ENCODE measurements at regions of chr16 and their contacts with region 1.

Region 1: DNA sequence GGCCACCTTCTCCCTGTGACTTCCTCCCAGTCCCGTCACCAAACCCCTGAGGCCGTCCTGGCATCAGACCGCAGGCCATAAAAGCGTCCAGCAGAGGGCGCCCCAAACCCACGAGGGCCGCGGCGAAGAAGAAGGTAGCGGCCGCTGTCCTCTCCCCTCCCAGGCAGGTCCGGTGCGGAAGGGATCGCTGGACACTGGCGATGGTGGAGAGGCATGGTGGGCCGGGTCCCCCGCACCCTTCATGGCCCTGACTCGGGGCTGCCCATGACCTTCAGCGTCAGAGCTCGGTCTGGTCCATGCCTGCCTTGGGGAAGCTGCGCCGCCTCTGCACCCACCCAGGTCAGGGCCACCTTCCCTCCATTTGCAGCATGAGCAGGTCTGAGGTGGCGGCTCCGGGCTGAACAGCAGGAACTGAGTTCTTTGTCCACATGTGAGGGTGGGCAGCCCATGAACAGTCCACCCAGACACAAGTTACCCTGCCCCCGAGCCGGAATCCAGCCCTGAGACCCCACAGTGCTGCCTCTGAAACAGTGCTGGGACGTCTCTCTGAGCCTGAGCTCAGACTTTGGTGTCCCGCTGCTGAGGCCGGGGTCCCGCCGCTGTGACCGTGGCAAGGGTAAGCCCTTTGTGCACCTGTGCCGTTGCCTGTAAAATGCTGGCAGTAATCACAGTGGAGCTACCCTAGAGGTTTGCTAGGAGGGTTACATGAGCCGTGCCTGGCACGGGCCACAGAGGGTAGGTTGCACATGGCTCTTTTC is 40.8 kb upstream of the CMIP start:
- DNase-seq: peak; percentile 86 to 88
- ATAC-seq: peak; percentile 81 to 95 (median 93)
- H3K4me3 ChIP-seq: peak overlapping the region in 7 of 10 donors; percentile 13 to 44 (median 20)
- H3K27ac ChIP-seq: peak overlapping the region in 1 of 10 donors; percentile 34
- H3K4me1 ChIP-seq: peaks cover 0 to 33% (median 10%) of the 10 kb centered on the region in 9 donors
- H3K27me3 ChIP-seq: peaks cover 0 to 5% (median 0%) of the 10 kb centered on the region in 7 donors
- CTCF ChIP-seq: peak; percentile 93 to 98 (median 97)

Region 2: GRCh38 chr16:81335669-81336068 is 68.1 kb before region 1 on chr16:
- intact Hi-C with region 1: no loop called
- DNase-seq: no peak
- ATAC-seq: no peak
- H3K4me3 ChIP-seq: no peak overlapping the region
- H3K27ac ChIP-seq: no peak overlapping the region
- H3K4me1 ChIP-seq: peaks cover 0 to 5% (median 0%) of the 10 kb centered on the region in 9 donors
- H3K27me3 ChIP-seq: no peaks in the 10 kb centered on the region
- CTCF ChIP-seq: no peak

Region 3: DNA sequence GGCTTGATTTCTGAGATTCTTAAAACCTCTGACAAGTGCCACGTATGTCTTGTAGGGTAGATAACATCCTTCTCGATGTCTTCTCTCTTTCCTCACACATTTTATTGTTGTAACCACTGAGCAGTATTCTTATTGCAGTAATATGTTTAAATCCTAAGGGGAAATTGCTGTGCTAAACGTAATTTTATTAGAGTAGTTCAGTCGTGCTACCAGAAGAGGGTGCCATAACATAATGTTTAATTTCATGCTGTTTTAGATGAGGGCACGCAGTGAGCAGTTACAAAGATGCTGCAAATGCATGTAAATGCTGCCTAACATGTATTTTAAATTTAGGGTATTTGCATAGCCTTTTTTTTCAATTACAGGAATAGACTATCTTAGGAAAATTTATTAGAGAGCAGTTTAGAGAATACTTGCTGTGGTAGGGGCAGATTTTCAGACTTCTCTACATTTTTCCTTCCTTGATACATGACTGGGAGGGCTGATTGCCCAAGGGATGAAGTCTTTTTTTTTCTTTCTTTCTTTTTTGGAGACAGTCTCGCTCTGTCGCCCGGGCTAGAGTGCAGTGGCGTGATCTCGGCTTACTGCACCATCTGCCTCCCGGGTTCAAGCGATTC is 37.4 kb before region 1 on chr16:
- intact Hi-C with region 1: loop called in 2 of 10 experiments (anchors 2 to 5 kb)
- DNase-seq: no peak
- ATAC-seq: peak in 7 of 8 donors; percentile 44 to 68 (median 65)
- H3K4me3 ChIP-seq: no peak overlapping the region
- H3K27ac ChIP-seq: peak overlapping the region in 1 of 10 donors; percentile 87
- H3K4me1 ChIP-seq: peaks cover 0 to 40% (median 12%) of the 10 kb centered on the region in 9 donors
- H3K27me3 ChIP-seq: no peaks in the 10 kb centered on the region
- CTCF ChIP-seq: peak; percentile 43 to 82 (median 70)

Region 4: DNA sequence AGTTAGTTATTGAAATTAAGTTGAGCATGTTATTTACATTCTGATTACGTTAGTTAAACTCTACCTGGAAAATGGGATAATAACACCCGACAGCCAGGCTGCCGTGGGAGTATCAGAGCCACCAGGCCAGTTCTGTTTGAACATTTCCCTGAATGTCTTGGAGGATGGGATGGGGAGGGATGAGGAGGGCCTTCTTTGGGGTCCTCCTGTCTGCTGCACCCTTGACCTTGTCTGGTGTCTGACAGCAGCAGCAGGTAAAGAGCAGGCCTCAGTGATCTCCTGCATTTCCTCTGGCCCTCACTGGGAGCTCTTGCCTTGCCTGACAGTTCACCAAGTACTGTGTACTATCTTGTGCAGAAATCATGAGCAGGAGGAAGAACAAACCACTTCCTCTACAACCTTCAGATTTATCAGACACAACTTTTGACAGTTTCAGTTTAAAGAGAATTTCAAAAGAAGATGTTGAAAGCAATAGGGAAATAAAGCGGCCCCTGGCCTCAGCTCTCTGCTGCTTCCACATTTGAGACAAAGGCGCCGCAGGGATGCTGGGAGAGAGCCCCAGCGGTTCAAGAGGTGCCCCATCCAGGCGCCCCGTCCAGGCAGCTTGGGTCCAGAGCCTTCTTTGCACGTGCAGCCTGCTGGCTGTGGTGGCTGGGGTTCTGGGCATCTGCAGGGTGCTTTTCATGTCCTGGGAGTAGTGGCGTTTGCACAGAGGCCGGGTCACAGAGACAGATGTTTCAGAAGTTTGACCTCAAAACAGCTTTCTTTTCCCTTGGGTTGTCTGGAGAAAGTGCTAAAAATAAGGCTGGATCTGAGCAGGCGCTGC is 66.1 kb after region 1 on chr16:
- intact Hi-C with region 1: no loop called
- DNase-seq: peak in 1 of 2 donors; percentile 34
- ATAC-seq: peak in 4 of 8 donors; percentile 28 to 40 (median 34)
- H3K4me3 ChIP-seq: peak overlapping the region in 1 of 10 donors; percentile 31
- H3K27ac ChIP-seq: peak overlapping the region in 4 of 10 donors; percentile 23 to 91 (median 37)
- H3K4me1 ChIP-seq: peaks cover 6 to 100% (median 50%) of the 10 kb centered on the region in 9 donors
- H3K27me3 ChIP-seq: no peaks in the 10 kb centered on the region
- CTCF ChIP-seq: no peak

Region 5: DNA sequence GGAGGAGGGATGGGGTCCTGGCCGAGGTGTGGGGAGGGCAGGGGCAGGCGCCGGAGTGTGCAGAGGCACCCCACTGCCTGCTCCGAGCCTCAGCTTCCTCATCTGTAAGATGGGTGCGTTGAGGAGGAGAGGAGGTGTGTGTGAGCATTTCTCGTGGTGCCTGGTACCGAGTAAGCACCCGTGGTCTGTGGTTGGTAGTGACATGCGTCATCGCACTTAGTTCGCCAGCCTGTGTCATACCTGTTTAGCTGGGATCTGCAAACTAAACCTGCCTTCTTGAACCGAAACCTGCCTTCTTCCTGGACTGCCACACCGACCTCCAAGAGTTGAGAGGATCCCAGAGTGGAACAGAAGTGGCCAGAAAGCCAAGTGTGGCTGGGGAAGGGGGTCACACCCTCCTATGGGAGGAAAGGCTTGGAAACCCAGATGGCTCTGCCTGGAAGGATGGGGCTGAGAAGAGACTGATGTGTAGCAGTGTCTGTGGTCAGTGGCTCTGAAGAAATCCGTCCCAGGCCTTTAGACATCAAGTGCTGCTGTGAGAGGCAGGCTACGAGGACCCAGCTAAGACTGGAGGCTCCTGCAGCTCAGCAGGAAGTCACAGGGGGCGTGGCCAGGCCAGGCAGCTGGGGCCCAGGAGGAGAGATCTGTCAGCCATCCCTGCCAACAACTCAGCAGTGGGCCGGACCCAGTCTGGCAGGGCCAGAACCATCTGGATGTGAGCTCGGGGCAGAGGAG is 212.7 kb after region 1 on chr16:
- intact Hi-C with region 1: loop called in 7 of 10 experiments (anchors 5 to 10 kb)
- DNase-seq: peak; percentile 70 to 74
- ATAC-seq: peak in 6 of 8 donors; percentile 34 to 73 (median 59)
- H3K4me3 ChIP-seq: no peak overlapping the region
- H3K27ac ChIP-seq: peak overlapping the region in 2 of 10 donors; percentile 6 to 81
- H3K4me1 ChIP-seq: peaks cover 8 to 55% (median 49%) of the 10 kb centered on the region in 9 donors
- H3K27me3 ChIP-seq: no peaks in the 10 kb centered on the region
- CTCF ChIP-seq: no peak

Region 6: DNA sequence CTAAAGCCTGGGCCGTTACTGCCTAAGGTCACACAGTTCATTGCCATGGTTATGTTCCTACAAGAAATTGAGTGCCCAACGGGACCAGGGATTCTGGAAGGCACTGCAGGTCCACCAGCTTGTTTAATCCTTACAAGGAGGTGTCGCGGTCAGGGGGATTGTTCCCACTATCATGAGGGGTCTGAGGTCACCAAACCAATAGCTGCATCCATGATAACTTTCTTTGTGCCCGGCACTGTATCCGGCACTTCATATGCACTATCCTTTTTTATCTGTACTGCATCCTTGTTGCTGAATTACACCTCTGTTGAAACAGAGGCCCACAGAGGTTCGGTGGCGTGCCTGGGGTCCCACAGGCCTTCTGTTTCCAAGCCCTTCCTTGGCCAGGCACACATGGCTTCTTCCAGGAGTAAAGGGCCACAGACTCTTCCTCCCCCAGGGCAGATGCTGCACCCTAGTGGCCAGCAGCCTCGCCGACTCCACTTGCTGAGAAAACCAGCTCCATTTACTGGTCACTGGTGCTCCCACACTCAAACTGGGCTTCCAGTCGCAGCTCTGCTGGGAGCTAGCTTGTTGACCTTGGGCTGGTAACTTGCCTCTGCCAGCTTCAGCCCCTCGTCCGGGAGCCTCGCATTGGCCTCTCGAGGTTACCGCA is 293.3 kb after region 1 on chr16:
- intact Hi-C with region 1: loop called in 3 of 10 experiments (anchors 10 kb)
- DNase-seq: peak; percentile 51 to 55
- ATAC-seq: peak in 7 of 8 donors; percentile 24 to 59 (median 47)
- H3K4me3 ChIP-seq: no peak overlapping the region
- H3K27ac ChIP-seq: peak overlapping the region in 4 of 10 donors; percentile 30 to 61 (median 50)
- H3K4me1 ChIP-seq: peaks cover 0 to 58% (median 23%) of the 10 kb centered on the region in 9 donors
- H3K27me3 ChIP-seq: no peaks in the 10 kb centered on the region
- CTCF ChIP-seq: peak in 8 of 9 donors; percentile 47 to 72 (median 65)

Region 7: DNA sequence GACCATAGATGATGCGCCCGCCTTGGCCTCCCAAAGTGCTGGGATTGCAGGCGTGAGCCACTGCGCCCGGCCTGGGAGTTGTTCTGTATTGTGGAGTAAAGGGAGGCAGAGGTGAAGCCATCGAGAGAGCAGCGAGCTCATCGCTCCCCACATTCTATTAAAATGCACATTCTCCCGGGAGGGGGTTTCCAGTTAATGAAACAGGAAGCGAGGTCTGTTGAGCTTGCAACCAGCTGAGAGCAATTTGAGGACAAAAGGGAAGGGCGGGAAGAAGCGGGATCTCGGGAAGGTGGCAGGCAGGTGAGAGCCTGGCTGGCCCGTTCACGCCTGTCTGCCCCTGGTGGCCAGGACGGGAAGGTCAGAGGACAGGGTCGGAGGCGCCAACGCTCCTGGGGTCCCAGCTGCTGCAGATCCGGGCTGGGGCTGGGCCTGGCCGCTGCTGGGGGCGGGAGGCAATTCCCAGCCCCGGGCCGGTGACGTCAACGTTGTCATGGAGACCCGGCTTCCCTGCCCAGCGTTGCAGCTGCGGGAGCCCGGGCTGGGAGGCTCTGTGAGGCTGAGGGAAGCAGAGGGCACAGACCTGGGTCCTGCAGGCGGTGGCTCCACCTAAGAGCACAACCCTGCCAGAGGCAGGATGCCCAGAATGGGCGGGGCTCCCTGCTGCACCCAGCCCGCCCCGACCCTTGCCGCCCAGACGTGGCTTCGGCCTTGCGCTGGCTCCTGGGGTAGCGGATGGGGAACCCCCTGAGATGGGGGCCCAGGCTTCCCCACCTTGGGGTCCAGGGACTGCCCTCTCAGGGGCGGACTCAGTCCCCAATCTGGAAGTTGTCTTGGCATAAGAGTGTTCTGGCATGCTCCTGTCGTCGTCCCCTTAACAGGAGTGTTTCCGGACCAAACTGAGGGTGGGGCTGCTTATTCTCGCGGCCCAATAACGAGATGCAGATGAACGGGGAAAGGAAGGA is 326.6 kb after region 1 on chr16:
- intact Hi-C with region 1: loop called in 3 of 10 experiments (anchors 2 to 10 kb)
- DNase-seq: peak; percentile 89 to 91
- ATAC-seq: peak; percentile 92 to 97 (median 95)
- H3K4me3 ChIP-seq: peak overlapping the region in 9 of 10 donors; percentile 34 to 59 (median 48)
- H3K27ac ChIP-seq: peak overlapping the region in 9 of 10 donors; percentile 23 to 85 (median 68)
- H3K4me1 ChIP-seq: peaks cover 4 to 16% (median 12%) of the 10 kb centered on the region in 9 donors
- H3K27me3 ChIP-seq: peaks cover 0 to 3% (median 0%) of the 10 kb centered on the region in 7 donors
- CTCF ChIP-seq: peak; percentile 32 to 71 (median 62)

Measured in heart right ventricle (tissue), 16 donors.